WTC11 (cell line): ENCODE measurements at regions of chr19 and their contacts with region 1.

Region 1: GRCh38 chr19:35702223-35703012 is 1.9 kb upstream of the ZBTB32 start:
- DNase-seq: peak; percentile 96
- ATAC-seq: peak; percentile 96
- H3K4me3 Mint-ChIP-seq: peak overlapping the region; percentile 85
- H3K27ac Mint-ChIP-seq: peak overlapping the region; percentile 98
- H3K4me1 Mint-ChIP-seq: no peaks in the 10 kb centered on the region; the same call in 1 of the 2 replicates
- H3K27me3 Mint-ChIP-seq: peaks cover 44% of the 10 kb centered on the region
- CTCF ChIP-seq: no peak

Region 2: GRCh38 chr19:35430409-35431144 is 271.8 kb before region 1 on chr19:
- CTCF ChIA-PET with region 1: no interaction called
- POLR2A ChIA-PET with region 1: no interaction called
- DNase-seq: no peak
- ATAC-seq: no peak
- H3K4me3 Mint-ChIP-seq: no peak overlapping the region
- H3K27ac Mint-ChIP-seq: no peak overlapping the region
- H3K4me1 Mint-ChIP-seq: no peaks in the 10 kb centered on the region
- H3K27me3 Mint-ChIP-seq: peaks cover 10% of the 10 kb centered on the region
- CTCF ChIP-seq: no peak

Region 3: GRCh38 chr19:35716175-35716800 is 13.9 kb after region 1 on chr19:
- CTCF ChIA-PET with region 1: interaction called, 16 read pairs
- POLR2A ChIA-PET with region 1: interaction called, 14 read pairs
- DNase-seq: no peak
- ATAC-seq: peak; percentile 3
- H3K4me3 Mint-ChIP-seq: peak overlapping the region; percentile 83
- H3K27ac Mint-ChIP-seq: peak overlapping the region; percentile 97
- H3K4me1 Mint-ChIP-seq: peaks cover 42% of the 10 kb centered on the region
- H3K27me3 Mint-ChIP-seq: no peaks in the 10 kb centered on the region
- CTCF ChIP-seq: no peak